ENCODE measurements at regions of chr16 and their contacts with region 1.

Region 1: DNA sequence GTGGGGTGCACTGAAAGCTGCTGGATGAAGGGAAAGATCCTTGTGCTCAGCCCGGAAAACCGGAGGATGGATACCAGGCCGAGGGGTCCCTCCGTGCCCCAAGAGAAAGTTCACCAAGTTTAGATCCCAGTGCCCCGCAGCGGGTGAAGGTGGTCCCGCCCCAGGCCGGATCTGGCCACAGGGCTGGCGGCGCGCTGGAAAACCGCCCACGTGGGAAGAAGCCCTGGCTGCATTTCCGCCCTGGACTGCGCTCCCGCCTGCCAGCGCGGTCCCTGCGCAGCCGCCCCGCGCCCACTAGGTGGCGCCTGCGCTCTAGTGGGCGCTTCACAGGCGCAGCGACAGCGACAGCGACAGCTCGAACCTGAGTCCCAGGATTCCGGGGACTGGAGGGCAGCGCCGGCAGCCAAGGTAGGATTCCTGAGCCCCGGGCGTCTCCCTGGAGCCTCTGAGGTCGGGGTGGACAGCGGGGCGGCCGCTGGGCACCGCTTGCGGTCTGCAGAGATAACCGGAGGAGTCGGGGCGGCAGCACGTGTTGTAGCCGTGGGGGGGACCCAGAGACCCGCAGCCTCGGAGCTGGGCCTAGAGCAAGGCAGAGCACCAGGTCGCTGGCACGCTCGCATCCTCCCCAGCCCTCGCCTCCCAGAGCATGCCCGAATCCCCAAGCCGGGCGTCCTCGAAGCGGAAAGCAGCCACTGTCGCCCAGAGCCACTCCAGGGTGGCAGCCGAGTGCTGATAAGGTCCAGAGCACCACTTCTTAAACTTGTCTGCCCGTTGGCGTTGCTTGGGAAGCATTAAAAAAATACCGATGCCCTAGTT is at the start of gene CHD9:
- DNase-seq: peak; percentile 80 to 90
- H3K4me3 ChIP-seq: peak within 1 kb of the TSS; percentile 59 to 68
- H3K27ac ChIP-seq: peak within 1 kb of the TSS; percentile 76 to 88
- H3K4me1 ChIP-seq: peaks cover 0 to 36% (median 12%) of the 10 kb centered on the region in 4 donors
- H3K27me3 ChIP-seq: no peaks in the 10 kb centered on the region
- CTCF ChIP-seq: peak; percentile 99 to 100

Region 2: DNA sequence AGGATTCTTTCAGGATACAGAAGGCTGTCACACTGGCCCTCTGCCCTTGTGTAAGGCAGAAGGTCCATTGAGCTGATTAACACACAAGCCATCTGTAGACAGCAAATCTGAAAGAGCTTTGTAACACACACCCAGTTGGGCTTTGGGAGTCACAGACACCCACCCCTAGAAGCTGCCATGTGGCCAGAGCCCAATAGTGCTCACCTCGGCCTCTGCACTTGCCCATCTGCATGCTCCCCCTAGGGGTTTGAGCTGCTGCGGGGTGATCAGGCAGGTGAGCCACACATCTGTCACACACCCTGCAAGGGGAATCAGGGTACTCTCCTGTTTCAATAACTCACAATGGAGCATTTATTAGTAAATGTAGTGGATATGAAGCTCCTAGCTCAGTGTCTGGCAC is 140.4 kb before region 1 on chr16:
- intact Hi-C with region 1: no loop called
- DNase-seq: no peak
- H3K4me3 ChIP-seq: no peak overlapping the region
- H3K27ac ChIP-seq: no peak overlapping the region
- H3K4me1 ChIP-seq: no peaks in the 10 kb centered on the region
- H3K27me3 ChIP-seq: no peaks in the 10 kb centered on the region
- CTCF ChIP-seq: no peak

Region 3: DNA sequence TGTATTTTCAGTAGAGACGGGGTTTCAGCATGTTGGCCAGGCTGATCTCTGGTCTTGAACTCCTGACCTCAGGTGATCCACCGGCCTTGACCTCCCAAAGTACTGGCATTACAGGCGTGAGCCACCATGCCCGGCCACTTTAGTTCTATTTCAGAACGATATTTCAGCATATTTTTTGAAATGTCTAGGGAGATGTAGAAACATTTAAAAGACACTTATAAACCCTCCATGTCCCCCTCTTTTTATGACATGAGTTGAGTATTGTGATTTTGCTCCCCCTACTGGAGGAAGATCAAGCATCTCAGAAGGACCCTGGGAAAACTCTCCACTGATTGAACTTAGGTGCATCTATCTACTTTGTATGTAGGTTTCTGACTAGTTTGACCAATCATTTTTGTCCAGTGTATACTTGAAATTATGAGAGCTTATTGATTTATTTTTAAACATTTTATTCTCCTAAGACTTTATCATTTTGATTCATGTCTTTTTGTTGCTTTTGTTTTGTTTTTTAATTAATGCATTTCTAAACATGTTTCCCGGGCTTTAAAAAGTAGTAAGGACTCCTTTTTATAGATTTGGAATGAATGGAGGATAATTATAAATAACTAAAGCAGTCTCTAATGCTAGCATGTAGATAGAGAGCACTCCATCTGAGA is 105.0 kb after region 1 on chr16:
- intact Hi-C with region 1: loop called (anchors 5 kb)
- DNase-seq: no peak
- H3K4me3 ChIP-seq: no peak overlapping the region
- H3K27ac ChIP-seq: peak overlapping the region in 1 of 2 donors; percentile 6
- H3K4me1 ChIP-seq: peaks cover 0 to 21% (median 0%) of the 10 kb centered on the region in 4 donors
- H3K27me3 ChIP-seq: no peaks in the 10 kb centered on the region
- CTCF ChIP-seq: peak; percentile 63 to 69

Region 4: GRCh38 chr16:53207810-53208752 is 153.2 kb after region 1 on chr16:
- intact Hi-C with region 1: loop called (anchors 10 kb)
- DNase-seq: peak in 1 of 2 donors; percentile 38
- H3K4me3 ChIP-seq: peak overlapping the region; percentile 40 to 44
- H3K27ac ChIP-seq: peak overlapping the region; percentile 68 to 74
- H3K4me1 ChIP-seq: peaks cover 0 to 57% (median 15%) of the 10 kb centered on the region in 4 donors
- H3K27me3 ChIP-seq: no peaks in the 10 kb centered on the region
- CTCF ChIP-seq: peak; percentile 43